ENCODE measurements at regions of chr13 and their contacts with region 1.

Region 1: DNA sequence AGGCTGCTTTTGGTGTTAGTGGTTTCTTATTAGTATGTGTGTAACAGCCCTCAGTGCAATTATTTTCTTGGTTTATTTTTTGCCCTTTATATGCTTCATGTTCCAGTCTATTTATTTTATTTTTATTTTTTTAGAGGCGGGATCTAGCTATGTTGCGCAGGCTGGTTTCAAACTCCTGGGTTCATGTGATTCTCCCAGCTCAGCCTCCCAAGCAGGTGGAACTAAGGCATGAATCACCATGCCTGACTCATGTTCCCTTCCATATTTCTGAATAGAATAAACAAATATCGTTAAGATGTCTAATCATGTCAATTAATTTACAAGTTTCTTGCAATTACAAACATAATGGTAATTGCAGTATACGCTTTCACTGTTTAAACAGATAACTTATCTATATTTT is 11.7 kb downstream of the SKA3 start:
- DNase-seq: no peak
- H3K4me3 ChIP-seq: no peak overlapping the region
- CTCF ChIP-seq: no peak

Region 2: DNA sequence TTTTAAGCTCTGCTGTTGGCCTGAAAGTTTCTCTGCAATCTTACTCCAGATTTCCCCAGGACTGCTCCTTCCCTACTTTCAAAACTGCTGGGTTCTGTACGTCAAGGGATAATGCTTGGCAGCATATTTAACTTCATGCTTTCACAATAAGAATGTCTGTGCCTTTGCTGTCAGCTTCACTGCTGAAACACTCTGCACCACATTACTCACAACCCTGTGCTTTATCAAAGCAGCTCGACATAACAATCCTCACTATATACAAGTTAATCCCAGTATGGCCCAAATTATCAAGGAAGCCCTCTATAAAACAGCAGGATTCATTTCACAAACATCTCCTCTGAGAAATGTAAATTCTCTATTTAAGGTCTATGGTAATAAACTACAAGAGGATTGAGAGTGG is 120.7 kb before region 1 on chr13:
- CTCF ChIA-PET with region 1: no interaction called
- POLR2A ChIA-PET with region 1: no interaction called
- DNase-seq: peak; percentile 75
- H3K4me3 ChIP-seq: no peak overlapping the region
- CTCF ChIP-seq: no peak

Region 3: DNA sequence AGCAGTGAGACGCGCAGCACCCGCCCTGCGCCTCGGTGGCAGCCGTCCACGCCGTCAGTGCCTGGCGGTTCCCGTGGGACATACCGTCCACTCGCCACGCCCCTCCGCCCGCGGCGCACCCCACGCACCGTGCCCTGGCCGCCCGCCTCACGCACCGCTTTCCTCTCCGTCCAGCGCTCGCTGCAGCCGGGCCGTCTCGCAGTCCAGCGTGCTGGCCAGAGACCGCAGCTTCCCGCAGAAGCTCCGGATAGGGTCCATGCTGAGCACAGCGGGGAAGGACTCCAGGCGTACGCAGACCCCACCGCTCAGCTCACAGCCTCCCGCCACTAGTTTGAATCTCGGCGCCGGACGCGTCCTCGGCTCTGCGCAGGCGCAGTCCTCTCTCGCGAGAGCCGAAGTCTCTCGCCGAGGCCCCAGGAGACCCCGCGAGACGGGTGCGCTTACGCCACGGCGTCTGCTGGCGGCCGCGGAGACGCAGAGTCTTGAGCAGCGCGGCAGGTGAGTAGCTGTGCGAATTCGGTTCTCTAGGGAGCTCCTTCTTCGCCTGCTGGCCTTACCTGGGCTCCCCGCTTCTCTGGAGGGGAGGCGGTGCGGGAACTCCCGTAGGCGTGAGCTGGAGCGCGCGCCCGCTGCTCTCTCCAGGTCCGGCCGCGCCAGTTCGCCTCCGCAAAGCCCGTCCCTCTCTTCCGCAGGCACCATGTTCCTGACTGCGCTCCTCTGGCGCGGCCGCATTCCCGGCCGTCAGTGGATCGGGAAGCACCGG is 11.8 kb after region 1 on chr13 and contains the starts of genes MRPL57 and SKA3:
- CTCF ChIA-PET with region 1: interaction called, 10 read pairs
- POLR2A ChIA-PET with region 1: no interaction called
- DNase-seq: peak; percentile 49
- H3K4me3 ChIP-seq: peak within 1 kb of the TSS; percentile 88
- CTCF ChIP-seq: peak; percentile 5